CD14-positive monocyte (primary cell): ENCODE measurements at regions of chr12 and their contacts with region 1.

Region 1: GRCh38 chr12:56510786-56511185 is 10.8 kb upstream of the RBMS2 start:
- DNase-seq: no peak
- H3K4me3 ChIP-seq: no peak overlapping the region
- H3K4me3 Mint-ChIP-seq: no peak overlapping the region
- H3K27ac ChIP-seq: no peak overlapping the region
- H3K27ac Mint-ChIP-seq: no peak overlapping the region
- H3K4me1 ChIP-seq: peaks cover 0 to 3% of the 10 kb centered on the region in 2 donors
- H3K4me1 Mint-ChIP-seq: peaks cover 3% of the 10 kb centered on the region
- H3K27me3 ChIP-seq: no peaks in the 10 kb centered on the region
- H3K27me3 Mint-ChIP-seq: no peaks in the 10 kb centered on the region
- CTCF ChIP-seq: no peak

Region 2: GRCh38 chr12:56581418-56582145 is 70.8 kb after region 1 on chr12:
- intact Hi-C with region 1: no loop called
- DNase-seq: no peak
- H3K4me3 ChIP-seq: no peak overlapping the region
- H3K4me3 Mint-ChIP-seq: no peak overlapping the region
- H3K27ac ChIP-seq: no peak overlapping the region
- H3K27ac Mint-ChIP-seq: no peak overlapping the region
- H3K4me1 ChIP-seq: no peaks in the 10 kb centered on the region
- H3K4me1 Mint-ChIP-seq: peaks cover 5% of the 10 kb centered on the region
- H3K27me3 ChIP-seq: no peaks in the 10 kb centered on the region
- H3K27me3 Mint-ChIP-seq: peaks cover 0 to 1% (median 0%) of the 10 kb centered on the region in 3 donors
- CTCF ChIP-seq: no peak

Region 3: DNA sequence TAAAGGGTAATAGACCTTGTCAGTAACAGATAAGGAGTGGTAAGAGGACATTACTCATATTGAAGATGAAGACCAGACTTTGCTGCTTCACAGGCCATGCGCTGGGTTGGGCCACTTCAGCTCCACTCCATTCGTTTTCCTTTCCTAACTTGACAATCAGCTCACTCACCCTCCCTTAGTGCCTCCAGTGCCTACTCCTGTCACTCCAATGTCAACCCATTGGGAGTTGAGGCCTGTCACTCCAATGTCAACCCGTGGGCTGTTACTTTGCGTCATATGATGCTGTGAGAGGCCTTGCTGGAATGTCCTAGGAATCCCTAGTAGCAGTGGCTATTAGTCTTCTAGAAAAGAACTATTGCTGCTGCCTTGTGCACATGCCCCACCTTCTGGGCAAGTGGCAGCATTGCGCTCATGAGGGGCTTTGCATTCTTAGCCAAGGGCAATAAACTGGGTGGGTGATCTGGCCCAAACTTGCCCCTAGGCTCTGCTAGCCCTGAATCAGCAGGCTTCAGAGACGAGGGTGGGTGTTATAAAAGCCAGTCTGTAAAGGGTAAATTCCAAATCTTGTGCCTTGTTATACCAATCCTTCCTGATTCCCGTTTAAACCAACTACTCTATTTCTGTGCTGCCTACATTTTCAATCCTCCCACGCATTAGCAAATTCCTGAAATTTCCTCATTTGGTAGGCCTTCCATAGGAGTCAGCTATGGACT is 83.3 kb after region 1 on chr12:
- intact Hi-C with region 1: loop called (anchors 5 kb)
- DNase-seq: peak; percentile 24 to 54 (median 41)
- H3K4me3 ChIP-seq: no peak overlapping the region
- H3K4me3 Mint-ChIP-seq: no peak overlapping the region
- H3K27ac ChIP-seq: no peak overlapping the region
- H3K27ac Mint-ChIP-seq: peak overlapping the region in 3 of 7 donors; percentile 7 to 79 (median 64)
- H3K4me1 ChIP-seq: no peaks in the 10 kb centered on the region
- H3K4me1 Mint-ChIP-seq: no peaks in the 10 kb centered on the region
- H3K27me3 ChIP-seq: no peaks in the 10 kb centered on the region
- H3K27me3 Mint-ChIP-seq: peaks cover 0 to 1% (median 0%) of the 10 kb centered on the region in 3 donors
- CTCF ChIP-seq: peak; percentile 90